Posterior vena cava (tissue), 2 donors: ENCODE measurements at regions of chr10 and their contacts with region 1.

Region 1: GRCh38 chr10:103367782-103368518 is at the start of gene TAF5:
- DNase-seq: peak; percentile 97
- total RNA-seq, gene TAF5: 2.1 to 2.4 TPM

Region 2: DNA sequence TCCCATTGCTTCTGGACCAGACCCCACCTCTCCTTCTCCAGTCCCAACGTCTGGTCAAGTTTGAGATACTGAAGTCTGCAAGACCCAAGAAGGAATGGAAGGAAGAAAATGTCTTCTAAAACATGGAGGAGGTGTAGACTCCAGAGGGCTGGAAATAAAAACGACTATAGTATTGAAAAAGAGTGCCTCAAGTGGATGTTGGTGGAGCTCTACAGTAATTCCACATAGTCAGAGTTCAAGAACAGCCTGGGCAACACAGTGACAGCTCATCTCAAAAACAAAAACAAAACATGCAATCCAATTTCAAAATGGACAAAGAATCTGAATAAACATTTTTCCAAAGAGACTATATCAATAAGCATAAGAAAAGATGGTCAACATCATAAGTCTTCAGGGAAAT is 14.7 kb before region 1 on chr10:
- intact Hi-C with region 1: loop called in 1 of 2 experiments (anchors 2 kb)
- DNase-seq: no peak

Region 3: DNA sequence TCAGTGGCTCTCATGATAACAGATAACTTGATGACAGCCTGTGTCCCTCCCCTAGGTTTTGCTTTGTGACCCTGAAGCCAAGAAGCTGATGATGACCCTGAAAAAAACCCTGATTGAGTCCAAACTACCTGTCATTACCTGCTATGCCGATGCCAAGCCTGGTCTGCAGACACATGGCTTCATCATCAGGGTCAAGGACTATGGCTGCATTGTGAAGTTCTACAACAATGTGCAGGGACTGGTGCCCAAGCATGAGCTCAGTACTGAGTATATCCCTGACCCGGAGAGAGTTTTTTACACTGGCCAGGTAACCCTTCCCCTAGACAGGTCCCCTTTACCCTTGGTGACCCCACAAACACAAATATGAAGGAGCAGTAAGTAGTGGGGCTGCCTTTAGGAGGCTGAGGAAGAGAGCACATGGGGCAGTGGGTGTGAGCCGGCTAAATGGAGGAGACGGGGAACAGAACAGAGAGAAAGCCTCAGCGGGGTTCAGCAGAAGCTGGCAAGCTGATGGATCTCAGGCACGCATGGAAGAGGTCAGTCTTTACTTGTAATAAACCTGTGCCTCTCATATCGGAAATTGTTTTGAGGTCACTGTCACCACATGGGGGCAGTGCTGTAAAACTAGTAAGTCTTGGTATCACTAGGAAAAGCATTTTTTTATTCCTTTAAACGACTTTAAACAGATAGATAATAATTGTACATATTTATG is 48.6 kb after region 1 on chr10:
- intact Hi-C with region 1: no loop called
- DNase-seq: no peak